ENCODE measurements at regions of chr2 and their contacts with region 1.

Region 1: GRCh38 chr2:46461011-46461674 is 18.2 kb upstream of the TMEM247 start:
- DNase-seq: peak; percentile 58 to 66 (median 60)
- H3K4me3 ChIP-seq: peak overlapping the region in 5 of 7 experiments; percentile 20 to 68 (median 43)
- H3K27ac ChIP-seq: peak overlapping the region in 1 of 2 experiments; percentile 65
- H3K4me1 ChIP-seq: peaks cover 0 to 45% (median 17%) of the 10 kb centered on the region in 4 experiments
- H3K27me3 ChIP-seq: no peaks in the 10 kb centered on the region

Region 2: DNA sequence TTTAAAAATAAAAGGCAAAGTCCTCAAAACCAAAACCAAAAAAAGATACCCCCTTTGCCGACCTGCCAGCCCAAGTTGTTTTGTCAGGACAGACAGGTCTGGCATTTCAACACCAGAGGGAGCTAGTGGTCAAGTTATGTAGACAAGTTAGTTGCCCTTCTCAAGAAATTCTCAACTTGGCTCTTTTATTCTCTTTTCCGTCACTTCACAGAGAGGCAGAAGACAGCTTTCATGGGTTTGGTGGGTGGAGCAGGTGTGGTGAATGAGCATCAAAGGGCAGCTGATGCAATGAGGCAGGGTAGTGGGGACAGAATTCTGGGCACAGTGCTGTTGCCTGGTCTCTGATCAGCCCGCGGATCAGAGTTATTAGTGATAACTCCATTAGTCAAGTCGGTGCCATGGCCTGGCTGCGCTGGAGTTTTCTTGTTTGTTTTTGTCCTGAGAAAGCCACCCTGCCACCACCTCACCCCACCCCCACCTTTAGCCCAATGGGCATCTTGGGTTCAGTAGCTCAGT is 467.6 kb before region 1 on chr2:
- CTCF ChIA-PET with region 1: interaction called, 17 read pairs
- POLR2A ChIA-PET with region 1: no interaction called
- DNase-seq: peak; percentile 82 to 93 (median 89)
- H3K4me3 ChIP-seq: no peak overlapping the region
- H3K27ac ChIP-seq: no peak overlapping the region
- H3K4me1 ChIP-seq: peaks cover 0 to 2% (median 0%) of the 10 kb centered on the region in 4 experiments
- H3K27me3 ChIP-seq: no peaks in the 10 kb centered on the region

Region 3: DNA sequence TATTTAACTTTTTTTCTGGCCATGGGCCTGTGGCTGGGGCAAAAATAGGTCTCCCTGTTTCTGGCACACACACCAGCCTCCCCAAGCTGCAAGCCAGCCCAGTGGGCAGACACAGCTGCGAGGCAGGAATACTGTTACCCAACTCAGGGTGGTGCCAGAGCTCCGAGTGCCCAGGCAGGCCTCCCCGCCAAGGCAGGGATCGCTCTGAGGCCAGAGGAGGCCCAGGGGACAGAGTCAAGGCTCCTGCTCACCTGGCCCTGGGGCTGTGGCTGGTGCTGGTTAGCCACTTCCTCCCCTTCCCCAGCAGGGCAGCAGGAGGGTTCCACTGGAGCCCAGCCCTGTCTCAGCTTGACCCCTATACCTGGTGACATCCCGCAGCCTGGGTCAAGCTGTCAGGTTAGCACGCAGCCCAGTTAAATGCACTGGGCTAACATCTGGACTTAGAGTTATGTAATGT is 231.0 kb before region 1 on chr2:
- CTCF ChIA-PET with region 1: interaction called, 16 read pairs
- POLR2A ChIA-PET with region 1: no interaction called
- DNase-seq: peak; percentile 27 to 73 (median 68)
- H3K4me3 ChIP-seq: no peak overlapping the region
- H3K27ac ChIP-seq: no peak overlapping the region
- H3K4me1 ChIP-seq: peaks cover 0 to 20% (median 12%) of the 10 kb centered on the region in 4 experiments
- H3K27me3 ChIP-seq: no peaks in the 10 kb centered on the region

Region 4: GRCh38 chr2:46699934-46700256 is 238.8 kb after region 1 on chr2:
- CTCF ChIA-PET with region 1: no interaction called
- POLR2A ChIA-PET with region 1: no interaction called
- DNase-seq: peak in 1 of 3 donors; percentile 12
- H3K4me3 ChIP-seq: peak overlapping the region; percentile 75 to 92 (median 88)
- H3K27ac ChIP-seq: peak overlapping the region in 1 of 2 experiments; percentile 85
- H3K4me1 ChIP-seq: peaks cover 0 to 34% (median 18%) of the 10 kb centered on the region in 4 experiments
- H3K27me3 ChIP-seq: no peaks in the 10 kb centered on the region

Measured in common myeloid progenitor, CD34-positive (primary cell).